Transverse colon (tissue), 4 donors: ENCODE measurements at regions of chr16 and their contacts with region 1.

Region 1: GRCh38 chr16:2236337-2237101 is at the start of gene DNASE1L2:
- DNase-seq: no peak
- H3K4me3 ChIP-seq: peak within 1 kb of the TSS in 2 of 4 donors; percentile 4 to 12
- H3K27ac ChIP-seq: no peak within 1 kb of the TSS
- H3K4me1 ChIP-seq: peaks cover 13 to 38% (median 23%) of the 10 kb centered on the region in 4 donors
- H3K27me3 ChIP-seq: peaks cover 36% of the 10 kb centered on the region
- CTCF ChIP-seq: no peak
- EP300 ChIP-seq: no peak
- POLR2A ChIP-seq: no peak
- total RNA-seq, gene DNASE1L2: 0.55 to 3.0 (median 0.64) TPM in 3 of 4 donors, not detected in the other

Region 2: DNA sequence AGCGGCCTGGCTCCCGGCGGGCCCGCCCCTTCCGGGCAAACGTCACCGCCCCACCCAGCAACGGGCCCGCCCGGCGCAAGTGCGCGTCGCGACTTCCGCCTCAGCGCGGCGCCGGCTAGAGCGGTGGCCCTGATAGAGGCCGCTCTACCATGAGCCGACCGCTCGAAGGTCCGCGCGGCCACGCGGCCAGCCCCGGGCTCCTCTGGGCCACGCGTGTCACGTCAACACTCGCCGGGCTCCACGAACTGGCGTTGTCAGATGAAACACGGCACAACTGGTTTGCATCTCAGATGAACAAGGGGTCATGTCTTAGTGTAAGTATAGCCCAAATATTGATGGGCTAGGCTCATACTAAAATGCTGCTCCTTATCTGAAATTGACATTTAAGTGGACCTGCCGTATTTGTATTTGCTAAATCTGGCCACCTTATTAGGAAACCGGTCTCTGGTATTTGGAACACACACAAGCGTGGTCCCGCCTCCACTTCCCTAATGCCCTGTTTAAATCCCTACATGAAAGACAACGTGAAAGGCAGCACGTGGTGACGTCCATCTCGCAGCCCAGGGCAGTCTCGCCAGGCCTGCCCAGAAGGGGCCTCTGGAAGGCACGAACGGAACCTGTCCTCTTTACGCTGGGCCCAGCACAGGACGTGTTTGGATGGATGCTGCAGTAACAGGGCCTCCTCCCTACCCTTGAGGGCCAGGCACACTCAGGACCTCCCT is 226.6 kb before region 1 on chr16 and contains the start of gene ZNF598:
- in situ Hi-C with region 1: no loop called
- intact Hi-C with region 1: loop called (anchors 10 kb)
- DNase-seq: peak; percentile 86
- H3K4me3 ChIP-seq: peak within 1 kb of the TSS; percentile 78 to 98 (median 85)
- H3K27ac ChIP-seq: peak within 1 kb of the TSS; percentile 93 to 98 (median 94)
- H3K4me1 ChIP-seq: peaks cover 24 to 45% (median 37%) of the 10 kb centered on the region in 4 donors
- H3K27me3 ChIP-seq: no peaks in the 10 kb centered on the region
- CTCF ChIP-seq: peak in 1 of 5 experiments; percentile 25
- EP300 ChIP-seq: no peak
- POLR2A ChIP-seq: peak; percentile 98
- total RNA-seq, gene ZNF598: 28.3 to 145 (median 42.0) TPM

Region 3: GRCh38 chr16:2955779-2956578 is 719.5 kb after region 1 on chr16:
- in situ Hi-C with region 1: no loop called
- intact Hi-C with region 1: no loop called
- DNase-seq: no peak
- H3K4me3 ChIP-seq: no peak overlapping the region
- H3K27ac ChIP-seq: peak overlapping the region in 2 of 4 donors; percentile 27 to 53
- H3K4me1 ChIP-seq: peaks cover 0 to 11% (median 7%) of the 10 kb centered on the region in 4 donors
- H3K27me3 ChIP-seq: peaks cover 63% of the 10 kb centered on the region
- CTCF ChIP-seq: no peak
- EP300 ChIP-seq: no peak
- POLR2A ChIP-seq: no peak